ENCODE measurements at regions of chr15 and their contacts with region 1.

Region 1: DNA sequence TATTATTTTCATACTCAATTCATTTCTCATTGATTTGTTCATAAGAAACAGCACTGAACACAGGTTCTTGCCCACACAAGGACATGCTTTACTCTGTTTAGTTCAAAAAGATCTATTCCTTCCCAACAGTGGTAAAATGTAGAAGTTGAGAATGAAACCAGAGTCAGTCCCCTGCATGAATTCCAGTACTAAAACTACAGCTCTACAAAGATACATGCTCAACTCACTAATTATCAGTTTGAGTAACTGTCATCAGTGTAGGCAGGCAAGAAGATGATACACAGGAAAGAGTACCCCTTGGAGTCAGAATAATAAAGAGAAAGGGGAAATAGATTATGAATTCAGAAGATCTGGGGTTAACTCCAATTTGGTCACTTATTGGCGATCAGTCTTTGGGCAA is 43.2 kb downstream of the NR2E3 start:
- DNase-seq: no peak
- ATAC-seq: no peak
- H3K4me3 Mint-ChIP-seq: no peak overlapping the region
- H3K27ac Mint-ChIP-seq: no peak overlapping the region
- H3K4me1 Mint-ChIP-seq: no peaks in the 10 kb centered on the region
- H3K27me3 Mint-ChIP-seq: no peaks in the 10 kb centered on the region
- CTCF ChIP-seq: no peak

Region 2: DNA sequence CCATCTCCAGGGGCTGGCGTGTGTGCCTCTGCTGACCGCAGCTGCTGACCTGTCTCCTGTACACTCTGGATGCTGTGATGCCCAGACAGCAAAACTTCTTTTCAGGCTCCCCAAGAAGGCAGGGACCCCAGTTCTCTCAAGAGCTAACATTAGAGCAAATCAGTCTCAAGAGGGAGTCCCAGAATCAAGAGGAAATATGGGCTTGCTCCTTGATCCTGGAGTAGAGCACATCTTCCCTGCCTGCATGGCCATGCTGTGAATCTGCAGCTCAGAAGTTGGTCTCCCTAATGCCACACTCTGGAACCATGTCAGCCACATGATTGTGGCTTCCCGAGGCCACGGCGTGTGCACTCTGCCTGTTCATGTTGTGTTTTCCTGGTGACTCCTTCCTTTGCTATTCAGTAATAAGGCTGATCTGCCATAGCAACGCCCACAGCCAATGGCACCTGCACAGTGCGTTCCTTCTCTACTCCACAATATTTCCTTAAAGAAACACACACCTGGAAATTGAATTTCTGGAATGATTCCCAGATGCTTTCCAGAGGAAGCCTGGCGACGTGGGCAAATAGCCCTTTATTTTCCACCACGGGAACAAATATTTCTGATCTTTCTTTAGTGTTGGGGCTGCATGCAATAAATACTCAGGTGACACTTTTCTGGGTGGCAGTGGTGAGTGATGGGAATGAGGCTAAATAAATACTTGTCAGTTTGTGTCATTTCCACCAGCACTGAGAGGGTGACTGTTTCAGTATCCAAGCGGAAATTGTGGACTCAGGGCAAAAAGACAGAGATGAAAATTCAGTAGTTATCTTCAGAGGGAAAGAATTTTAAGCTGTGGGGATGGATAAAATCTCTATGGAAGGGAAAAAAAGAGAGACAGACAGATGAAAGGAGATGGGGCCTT is 760.2 kb before region 1 on chr15:
- CTCF ChIA-PET with region 1: no interaction called
- POLR2A ChIA-PET with region 1: no interaction called
- intact Hi-C with region 1: no loop called
- DNase-seq: no peak
- ATAC-seq: no peak
- H3K4me3 Mint-ChIP-seq: no peak overlapping the region
- H3K27ac Mint-ChIP-seq: no peak overlapping the region
- H3K4me1 Mint-ChIP-seq: no peaks in the 10 kb centered on the region
- H3K27me3 Mint-ChIP-seq: peaks cover 2% of the 10 kb centered on the region
- CTCF ChIP-seq: no peak

Region 3: GRCh38 chr15:71743861-71744382 is 109.6 kb before region 1 on chr15:
- CTCF ChIA-PET with region 1: no interaction called
- POLR2A ChIA-PET with region 1: no interaction called
- intact Hi-C with region 1: no loop called
- DNase-seq: no peak
- ATAC-seq: peak; percentile 37
- H3K4me3 Mint-ChIP-seq: no peak overlapping the region
- H3K27ac Mint-ChIP-seq: no peak overlapping the region
- H3K4me1 Mint-ChIP-seq: no peaks in the 10 kb centered on the region
- H3K27me3 Mint-ChIP-seq: peaks cover 10% of the 10 kb centered on the region
- CTCF ChIP-seq: peak; percentile 92

Region 4: GRCh38 chr15:71792521-71792920 is 61.0 kb before region 1 on chr15:
- CTCF ChIA-PET with region 1: no interaction called
- POLR2A ChIA-PET with region 1: no interaction called
- intact Hi-C with region 1: no loop called
- DNase-seq: no peak
- ATAC-seq: no peak
- H3K4me3 Mint-ChIP-seq: no peak overlapping the region
- H3K27ac Mint-ChIP-seq: no peak overlapping the region
- H3K4me1 Mint-ChIP-seq: no peaks in the 10 kb centered on the region
- H3K27me3 Mint-ChIP-seq: peaks cover 3% of the 10 kb centered on the region
- CTCF ChIP-seq: no peak

Region 5: DNA sequence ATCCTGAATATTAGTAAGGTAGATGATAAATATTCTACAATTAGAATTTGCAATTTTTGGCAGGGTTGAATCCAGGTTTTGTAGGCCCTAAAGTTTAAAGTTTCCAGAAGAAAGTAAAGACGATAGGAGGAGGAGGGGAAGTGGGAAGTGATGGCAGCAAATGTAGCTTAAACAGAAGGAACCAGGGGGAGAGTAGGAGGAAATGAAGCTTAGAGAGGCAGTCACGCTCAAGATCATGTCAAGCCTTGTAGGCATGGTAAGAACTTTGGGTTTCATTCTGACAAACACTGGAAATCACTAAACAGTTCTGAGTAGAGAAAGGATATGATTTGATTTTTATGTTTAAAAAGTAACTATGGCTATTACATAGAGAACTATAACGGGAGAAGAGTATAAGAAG is 20.7 kb after region 1 on chr15:
- CTCF ChIA-PET with region 1: no interaction called
- POLR2A ChIA-PET with region 1: no interaction called
- intact Hi-C with region 1: loop called (anchors 2 kb)
- DNase-seq: no peak
- ATAC-seq: no peak
- H3K4me3 Mint-ChIP-seq: no peak overlapping the region
- H3K27ac Mint-ChIP-seq: no peak overlapping the region
- H3K4me1 Mint-ChIP-seq: peaks cover 3% of the 10 kb centered on the region
- H3K27me3 Mint-ChIP-seq: no peaks in the 10 kb centered on the region
- CTCF ChIP-seq: no peak

Region 6: DNA sequence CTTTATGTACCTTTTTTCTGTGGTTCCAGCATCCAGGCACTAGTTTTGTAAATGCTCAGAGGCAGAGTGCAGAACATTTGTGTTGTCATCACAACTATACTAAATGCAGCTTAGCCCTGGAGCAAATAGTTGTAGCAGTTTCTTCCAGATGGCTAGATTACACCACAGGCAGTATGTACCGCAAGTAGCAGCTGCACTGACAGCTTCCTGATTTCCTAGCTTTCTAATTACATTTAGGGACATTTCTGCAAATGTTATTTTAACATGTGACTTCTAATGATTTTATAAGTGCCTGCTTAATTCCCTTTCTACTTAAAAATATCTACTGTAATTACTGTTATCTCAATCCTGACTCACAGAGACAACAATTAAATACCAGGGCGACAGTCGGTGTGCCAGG is 63.3 kb after region 1 on chr15:
- CTCF ChIA-PET with region 1: no interaction called
- POLR2A ChIA-PET with region 1: interaction called, 12 read pairs
- intact Hi-C with region 1: no loop called
- DNase-seq: no peak
- ATAC-seq: no peak
- H3K4me3 Mint-ChIP-seq: no peak overlapping the region
- H3K27ac Mint-ChIP-seq: no peak overlapping the region
- H3K4me1 Mint-ChIP-seq: peaks cover 5% of the 10 kb centered on the region
- H3K27me3 Mint-ChIP-seq: no peaks in the 10 kb centered on the region
- CTCF ChIP-seq: no peak

Region 7: GRCh38 chr15:71971905-71972304 is 118.4 kb after region 1 on chr15:
- CTCF ChIA-PET with region 1: no interaction called
- POLR2A ChIA-PET with region 1: no interaction called
- intact Hi-C with region 1: no loop called
- DNase-seq: no peak
- ATAC-seq: no peak
- H3K4me3 Mint-ChIP-seq: no peak overlapping the region
- H3K27ac Mint-ChIP-seq: no peak overlapping the region
- H3K4me1 Mint-ChIP-seq: no peaks in the 10 kb centered on the region
- H3K27me3 Mint-ChIP-seq: no peaks in the 10 kb centered on the region
- CTCF ChIP-seq: no peak